ENCODE measurements at regions of chr12 and their contacts with region 1.

Region 1: GRCh38 chr12:107670999-107671643 is 14.5 kb upstream of the PWP1 start:
- DNase-seq: no peak
- H3K4me3 ChIP-seq: no peak overlapping the region
- CTCF ChIP-seq: peak; percentile 62

Region 2: DNA sequence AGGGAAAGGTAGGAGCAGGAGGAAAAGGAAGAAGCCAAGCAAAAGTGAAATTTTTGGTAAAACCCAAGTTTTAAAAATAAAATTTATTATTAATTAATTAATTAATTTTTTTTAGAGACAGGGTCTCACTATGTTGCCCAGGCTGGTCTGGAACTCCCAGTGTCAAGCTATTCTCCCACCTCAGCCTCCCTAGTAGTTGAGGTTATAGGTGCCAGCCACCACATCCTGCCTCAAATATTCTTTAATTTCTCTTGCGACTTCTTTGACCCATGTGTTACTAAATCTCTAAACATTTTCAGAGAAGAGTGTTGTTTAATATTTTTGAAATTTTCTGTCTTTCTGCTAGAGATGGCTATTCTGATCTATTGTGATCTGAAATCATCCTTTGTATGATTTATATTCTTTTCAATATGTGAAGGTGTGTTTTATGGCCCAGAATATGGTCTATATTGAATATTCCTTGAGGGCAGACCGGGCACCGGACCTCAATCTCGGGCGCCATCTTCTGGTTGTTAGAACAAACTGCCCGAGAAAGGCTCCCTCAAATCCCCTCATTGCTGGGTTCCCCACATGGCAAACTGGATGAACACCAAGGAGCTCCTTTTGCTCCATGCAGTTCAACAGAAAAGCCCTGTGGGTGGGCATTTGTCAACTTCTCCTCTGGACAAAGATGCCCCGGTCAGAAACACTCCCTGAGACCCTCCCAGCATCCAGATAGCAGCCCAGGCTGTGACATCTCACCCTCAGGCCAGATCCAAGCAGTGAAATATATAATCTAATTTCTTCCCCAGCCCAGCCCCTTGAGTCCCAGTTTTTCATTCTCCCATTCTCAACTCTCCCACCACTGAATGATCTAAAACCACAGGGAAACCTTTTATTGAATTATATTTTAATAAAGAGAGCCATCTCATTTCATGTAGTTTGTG is 213.9 kb after region 1 on chr12:
- in situ Hi-C with region 1: loop called (anchors 25 kb)
- DNase-seq: peak; percentile 20
- H3K4me3 ChIP-seq: no peak overlapping the region
- CTCF ChIP-seq: peak; percentile 80